ENCODE measurements at regions of chr22 and their contacts with region 1.

Region 1: GRCh38 chr22:17057959-17058814 is 26.6 kb upstream of the IL17RA start:
- DNase-seq: peak; percentile 60
- H3K4me3 Mint-ChIP-seq: no peak overlapping the region
- H3K27ac Mint-ChIP-seq: no peak overlapping the region
- H3K4me1 Mint-ChIP-seq: peaks cover 2% of the 10 kb centered on the region
- H3K27me3 Mint-ChIP-seq: peaks cover 9% of the 10 kb centered on the region

Region 2: GRCh38 chr22:16917144-16918003 is 140.8 kb before region 1 on chr22:
- CTCF ChIA-PET with region 1: interaction called, 36 read pairs
- POLR2A ChIA-PET with region 1: no interaction called
- intact Hi-C with region 1: loop called (anchors 1 kb)
- DNase-seq: peak; percentile 75
- H3K4me3 Mint-ChIP-seq: no peak overlapping the region
- H3K27ac Mint-ChIP-seq: no peak overlapping the region
- H3K4me1 Mint-ChIP-seq: no peaks in the 10 kb centered on the region
- H3K27me3 Mint-ChIP-seq: peaks cover 27% of the 10 kb centered on the region

Region 3: GRCh38 chr22:16925407-16925966 is 132.7 kb before region 1 on chr22:
- CTCF ChIA-PET with region 1: interaction called, 11 read pairs
- POLR2A ChIA-PET with region 1: no interaction called
- intact Hi-C with region 1: no loop called
- DNase-seq: no peak
- H3K4me3 Mint-ChIP-seq: no peak overlapping the region
- H3K27ac Mint-ChIP-seq: no peak overlapping the region
- H3K4me1 Mint-ChIP-seq: no peaks in the 10 kb centered on the region
- H3K27me3 Mint-ChIP-seq: peaks cover 14% of the 10 kb centered on the region

Region 4: DNA sequence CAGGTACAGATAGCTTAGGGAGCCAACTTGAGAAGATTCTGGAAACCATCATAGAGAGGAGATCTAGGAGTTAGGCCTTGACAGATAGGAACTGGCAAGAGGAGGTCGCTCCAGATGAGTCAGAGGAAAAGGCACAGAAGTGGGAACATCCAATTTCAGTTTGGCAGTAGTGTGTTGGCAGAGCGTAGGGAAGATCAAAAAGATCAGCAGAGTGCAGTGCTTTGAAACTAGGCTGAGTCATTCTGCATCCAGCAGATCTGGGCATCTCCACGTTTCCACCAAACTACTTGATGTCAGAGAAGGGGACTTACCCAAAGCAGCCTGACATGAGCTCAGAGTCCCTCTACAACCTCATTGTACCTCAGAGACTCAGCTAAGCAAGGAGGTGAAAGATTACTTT is 108.6 kb before region 1 on chr22:
- CTCF ChIA-PET with region 1: interaction called, 10 read pairs
- POLR2A ChIA-PET with region 1: no interaction called
- intact Hi-C with region 1: no loop called
- DNase-seq: peak; percentile 43
- H3K4me3 Mint-ChIP-seq: no peak overlapping the region
- H3K27ac Mint-ChIP-seq: no peak overlapping the region
- H3K4me1 Mint-ChIP-seq: peaks cover 12% of the 10 kb centered on the region
- H3K27me3 Mint-ChIP-seq: no peaks in the 10 kb centered on the region

Region 5: GRCh38 chr22:16988257-16988656 is 69.9 kb before region 1 on chr22:
- CTCF ChIA-PET with region 1: no interaction called
- POLR2A ChIA-PET with region 1: no interaction called
- intact Hi-C with region 1: no loop called
- DNase-seq: no peak
- H3K4me3 Mint-ChIP-seq: no peak overlapping the region
- H3K27ac Mint-ChIP-seq: no peak overlapping the region
- H3K4me1 Mint-ChIP-seq: no peaks in the 10 kb centered on the region
- H3K27me3 Mint-ChIP-seq: peaks cover 11% of the 10 kb centered on the region

Region 6: DNA sequence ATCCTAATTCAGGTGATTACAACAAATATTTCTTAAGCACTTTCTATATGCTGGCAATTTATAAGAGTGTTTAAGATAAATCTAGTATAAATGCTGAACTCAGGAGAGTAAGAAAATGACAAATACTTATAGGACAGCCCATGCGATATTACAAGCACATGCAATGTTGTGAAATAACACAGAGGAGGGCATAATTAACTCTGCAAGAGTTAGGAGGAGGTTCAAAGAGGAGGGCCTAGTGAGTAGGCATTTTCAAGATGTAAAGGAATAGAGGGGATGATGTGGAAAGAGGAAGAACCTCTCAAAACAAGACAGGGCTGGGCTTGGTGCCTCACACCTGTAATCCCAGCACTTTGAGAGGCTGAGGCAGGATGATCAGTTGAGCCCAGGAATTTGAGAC is 10.5 kb before region 1 on chr22:
- CTCF ChIA-PET with region 1: interaction called, 13 read pairs
- POLR2A ChIA-PET with region 1: no interaction called
- intact Hi-C with region 1: no loop called
- DNase-seq: no peak
- H3K4me3 Mint-ChIP-seq: no peak overlapping the region
- H3K27ac Mint-ChIP-seq: no peak overlapping the region
- H3K4me1 Mint-ChIP-seq: no peaks in the 10 kb centered on the region
- H3K27me3 Mint-ChIP-seq: peaks cover 1% of the 10 kb centered on the region

Measured in activated CD4-positive, alpha-beta memory T cell treated with anti-CD3 and anti-CD28 coated beads for 36 hours (primary cell).